OCI-LY7 (cell line): ENCODE measurements at regions of chr5 and their contacts with region 1.

Region 1: GRCh38 chr5:142171270-142171669 is 62.7 kb downstream of the NDFIP1 start:
- DNase-seq: no peak
- H3K4me3 ChIP-seq: no peak overlapping the region
- H3K27ac ChIP-seq: no peak overlapping the region
- H3K4me1 ChIP-seq: no peaks in the 10 kb centered on the region
- CTCF ChIP-seq: 0 out of 2 replicates have a peak, but pooled peaks have one; percentile 28

Region 2: GRCh38 chr5:142079306-142079721 is 92.0 kb before region 1 on chr5:
- CTCF ChIA-PET with region 1: no interaction called
- POLR2A ChIA-PET with region 1: no interaction called
- intact Hi-C with region 1: no loop called
- DNase-seq: no peak
- H3K4me3 ChIP-seq: no peak overlapping the region
- H3K27ac ChIP-seq: no peak overlapping the region
- H3K4me1 ChIP-seq: no peaks in the 10 kb centered on the region
- CTCF ChIP-seq: no peak

Region 3: GRCh38 chr5:142215915-142216681 is 44.8 kb after region 1 on chr5:
- CTCF ChIA-PET with region 1: no interaction called
- POLR2A ChIA-PET with region 1: no interaction called
- intact Hi-C with region 1: no loop called
- DNase-seq: no peak
- H3K4me3 ChIP-seq: no peak overlapping the region
- H3K27ac ChIP-seq: no peak overlapping the region
- H3K4me1 ChIP-seq: no peaks in the 10 kb centered on the region
- CTCF ChIP-seq: no peak

Region 4: GRCh38 chr5:142263346-142263745 is 92.1 kb after region 1 on chr5:
- CTCF ChIA-PET with region 1: no interaction called
- POLR2A ChIA-PET with region 1: no interaction called
- intact Hi-C with region 1: loop called (anchors 5 kb)
- DNase-seq: no peak
- H3K4me3 ChIP-seq: no peak overlapping the region
- H3K27ac ChIP-seq: no peak overlapping the region
- H3K4me1 ChIP-seq: no peaks in the 10 kb centered on the region
- CTCF ChIP-seq: no peak

Region 5: GRCh38 chr5:142290577-142291299 is 119.5 kb after region 1 on chr5:
- CTCF ChIA-PET with region 1: no interaction called
- POLR2A ChIA-PET with region 1: no interaction called
- intact Hi-C with region 1: no loop called
- DNase-seq: no peak
- H3K4me3 ChIP-seq: no peak overlapping the region
- H3K27ac ChIP-seq: no peak overlapping the region
- H3K4me1 ChIP-seq: no peaks in the 10 kb centered on the region
- CTCF ChIP-seq: no peak